ENCODE measurements at regions of chr9 and their contacts with region 1.

Region 1: GRCh38 chr9:6931913-6932312 is 174.1 kb downstream of the KDM4C start:
- DNase-seq: peak; percentile 32
- H3K4me3 ChIP-seq: no peak overlapping the region
- H3K27ac ChIP-seq: no peak overlapping the region
- H3K4me1 ChIP-seq: peaks cover 0 to 22% (median 2%) of the 10 kb centered on the region in 4 donors
- H3K27me3 ChIP-seq: no peaks in the 10 kb centered on the region
- CTCF ChIP-seq: no peak
- EP300 ChIP-seq: no peak
- POLR2A ChIP-seq: no peak

Region 2: GRCh38 chr9:5364294-5365024 is 1567.5 kb before region 1 on chr9:
- in situ Hi-C with region 1: no loop called
- intact Hi-C with region 1: no loop called
- DNase-seq: no peak
- H3K4me3 ChIP-seq: no peak overlapping the region
- H3K27ac ChIP-seq: no peak overlapping the region
- H3K4me1 ChIP-seq: peaks cover 0 to 10% (median 3%) of the 10 kb centered on the region in 4 donors
- H3K27me3 ChIP-seq: no peaks in the 10 kb centered on the region
- CTCF ChIP-seq: no peak
- EP300 ChIP-seq: no peak
- POLR2A ChIP-seq: no peak

Region 3: GRCh38 chr9:6490863-6491262 is 441.1 kb before region 1 on chr9:
- in situ Hi-C with region 1: no loop called
- intact Hi-C with region 1: loop called (anchors 5 kb)
- DNase-seq: no peak
- H3K4me3 ChIP-seq: no peak overlapping the region
- H3K27ac ChIP-seq: no peak overlapping the region
- H3K4me1 ChIP-seq: no peaks in the 10 kb centered on the region
- H3K27me3 ChIP-seq: no peaks in the 10 kb centered on the region
- CTCF ChIP-seq: no peak
- EP300 ChIP-seq: no peak
- POLR2A ChIP-seq: no peak